ENCODE measurements at regions of chr3 and their contacts with region 1.

Region 1: DNA sequence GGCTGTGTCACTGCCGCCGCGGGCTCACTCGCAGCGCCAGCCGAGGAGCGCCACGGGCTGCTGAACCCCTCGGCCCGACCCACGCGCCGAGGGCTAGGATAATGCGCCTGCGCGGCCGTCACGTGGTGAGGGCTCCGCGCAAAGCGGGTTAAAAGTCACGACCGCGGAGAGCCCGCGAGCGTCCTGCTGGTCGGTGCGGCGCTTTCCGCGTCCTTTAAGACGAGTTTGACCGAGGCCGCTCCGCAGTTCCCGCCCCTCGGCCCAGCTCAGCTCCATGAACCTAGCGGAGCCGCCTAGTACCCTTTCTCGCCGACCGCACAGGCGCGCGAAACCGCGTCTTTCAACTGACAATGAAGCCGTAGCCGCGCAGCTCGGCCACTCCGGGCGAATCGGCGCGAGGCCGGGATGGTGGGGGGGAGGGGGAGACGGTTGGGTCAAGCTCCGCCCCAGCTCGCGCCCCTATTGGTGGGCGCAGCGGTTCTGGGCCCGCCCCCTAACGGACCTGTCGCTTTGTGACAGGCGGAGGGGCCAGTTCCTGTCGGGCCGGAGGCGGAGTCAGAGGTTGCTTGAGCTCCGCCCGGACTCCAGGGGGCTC is 636 bp upstream of the STT3B start:
- DNase-seq: peak; percentile 86
- ATAC-seq: peak; percentile 91
- H3K4me3 ChIP-seq: peak overlapping the region; percentile 92
- H3K27ac ChIP-seq: peak overlapping the region; percentile 92
- H3K4me1 ChIP-seq: peaks cover 6% of the 10 kb centered on the region; the same call in 1 of the 2 replicates
- H3K27me3 ChIP-seq: no peaks in the 10 kb centered on the region
- CTCF ChIP-seq: no peak
- EP300 ChIP-seq: peak; percentile 13 to 30; a peak in 1 of 4 replicates
- POLR2A ChIP-seq: peak; percentile 95
- RAD21 ChIP-seq: no peak

Region 2: GRCh38 chr3:30768703-30769685 is 763.1 kb before region 1 on chr3:
- CTCF ChIA-PET with region 1: interaction called, 4 read pairs
- POLR2A ChIA-PET with region 1: no interaction called
- RAD21 ChIA-PET with region 1: interaction called, 3 read pairs
- SMC1A ChIA-PET with region 1: interaction called, 4 read pairs
- in situ Hi-C with region 1: no loop called
- intact Hi-C with region 1: loop called (anchors 5 kb)
- DNase-seq: no peak
- ATAC-seq: peak; percentile 75
- H3K4me3 ChIP-seq: no peak overlapping the region
- H3K27ac ChIP-seq: no peak overlapping the region
- H3K4me1 ChIP-seq: no peaks in the 10 kb centered on the region
- H3K27me3 ChIP-seq: no peaks in the 10 kb centered on the region; a peak in 2 of 4 replicates
- CTCF ChIP-seq: peak; percentile 77
- EP300 ChIP-seq: no peak
- POLR2A ChIP-seq: no peak
- RAD21 ChIP-seq: peak; percentile 82

Region 3: GRCh38 chr3:31232055-31233025 is 299.7 kb before region 1 on chr3:
- CTCF ChIA-PET with region 1: no interaction called
- POLR2A ChIA-PET with region 1: interaction called, 12 read pairs
- RAD21 ChIA-PET with region 1: interaction called, 18 read pairs
- SMC1A ChIA-PET with region 1: interaction called, 18 read pairs
- in situ Hi-C with region 1: no loop called
- intact Hi-C with region 1: no loop called
- DNase-seq: no peak
- ATAC-seq: peak; percentile 23
- H3K4me3 ChIP-seq: no peak overlapping the region
- H3K27ac ChIP-seq: peak overlapping the region; percentile 57
- H3K4me1 ChIP-seq: peaks cover 37% of the 10 kb centered on the region
- H3K27me3 ChIP-seq: no peaks in the 10 kb centered on the region
- CTCF ChIP-seq: no peak
- EP300 ChIP-seq: no peak
- POLR2A ChIP-seq: no peak
- RAD21 ChIP-seq: no peak

Region 4: GRCh38 chr3:31364711-31365110 is 167.4 kb before region 1 on chr3:
- CTCF ChIA-PET with region 1: no interaction called
- POLR2A ChIA-PET with region 1: no interaction called
- RAD21 ChIA-PET with region 1: no interaction called
- SMC1A ChIA-PET with region 1: no interaction called
- in situ Hi-C with region 1: no loop called
- intact Hi-C with region 1: no loop called
- DNase-seq: no peak
- ATAC-seq: no peak
- H3K4me3 ChIP-seq: no peak overlapping the region
- H3K27ac ChIP-seq: no peak overlapping the region
- H3K4me1 ChIP-seq: no peaks in the 10 kb centered on the region
- H3K27me3 ChIP-seq: no peaks in the 10 kb centered on the region
- CTCF ChIP-seq: no peak; a peak in 1 of 6 replicates
- EP300 ChIP-seq: no peak
- POLR2A ChIP-seq: no peak
- RAD21 ChIP-seq: peak; percentile 47

Region 5: DNA sequence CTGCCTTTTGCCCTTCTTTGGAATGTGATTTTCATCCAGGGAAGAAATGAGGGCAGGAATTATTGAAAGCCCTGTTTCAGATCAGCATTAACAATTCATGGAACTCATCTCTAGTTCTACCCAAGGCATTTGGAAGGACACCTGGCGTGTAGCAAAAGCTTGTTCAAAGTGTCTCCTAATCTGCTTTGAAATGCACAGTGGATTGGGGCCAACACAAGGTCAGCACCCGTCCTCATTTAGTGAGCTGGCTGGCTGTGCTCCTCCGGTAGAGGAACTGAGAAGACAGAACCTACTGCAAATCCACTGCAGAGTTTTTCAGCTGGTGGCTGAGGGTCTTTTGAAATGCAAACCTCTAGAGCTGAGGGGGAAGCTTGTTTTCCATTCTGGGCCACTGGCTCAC is 140.9 kb before region 1 on chr3:
- CTCF ChIA-PET with region 1: interaction called, 3 read pairs
- POLR2A ChIA-PET with region 1: interaction called, 3 read pairs
- RAD21 ChIA-PET with region 1: interaction called, 4 read pairs
- SMC1A ChIA-PET with region 1: interaction called, 10 read pairs
- in situ Hi-C with region 1: no loop called
- intact Hi-C with region 1: no loop called
- DNase-seq: no peak
- ATAC-seq: peak; percentile 81
- H3K4me3 ChIP-seq: no peak overlapping the region
- H3K27ac ChIP-seq: peak overlapping the region; percentile 35; the same call in 1 of the 2 replicates
- H3K4me1 ChIP-seq: peaks cover 34% of the 10 kb centered on the region
- H3K27me3 ChIP-seq: no peaks in the 10 kb centered on the region
- CTCF ChIP-seq: no peak
- EP300 ChIP-seq: no peak
- POLR2A ChIP-seq: no peak
- RAD21 ChIP-seq: 0 out of 2 replicates have a peak, but pooled peaks have one; percentile 4

Region 6: DNA sequence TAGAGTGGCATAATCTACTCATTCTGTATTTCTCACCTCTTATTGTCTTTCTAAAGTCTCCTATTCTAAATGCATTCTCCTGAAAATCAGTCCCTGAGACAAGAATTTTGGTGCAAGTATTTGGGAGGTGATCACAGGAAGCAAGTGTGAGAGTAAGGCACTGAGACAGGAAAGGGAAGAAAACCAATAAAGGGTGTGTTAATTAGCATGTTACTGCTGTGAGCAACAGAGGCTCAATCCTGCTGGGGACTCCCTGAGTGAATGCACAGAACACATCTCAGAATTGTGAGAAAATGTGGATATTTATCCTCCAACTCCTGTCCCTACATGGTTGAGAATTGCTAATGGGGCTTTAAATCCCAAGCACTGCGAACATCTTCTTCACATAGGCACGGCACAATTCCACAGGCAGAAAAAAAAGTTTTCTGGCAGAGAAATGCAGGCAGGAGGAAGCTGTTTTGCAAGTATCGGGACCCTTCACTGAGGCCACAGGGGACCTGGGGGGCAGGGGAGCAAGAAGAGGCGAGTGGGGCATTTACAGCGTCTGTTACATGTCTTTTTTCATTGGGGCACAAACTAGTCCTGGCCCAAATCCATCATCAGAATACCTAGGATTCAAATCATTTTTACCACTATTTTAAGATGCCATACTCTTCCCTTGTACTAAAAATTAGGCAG is 26.6 kb before region 1 on chr3:
- CTCF ChIA-PET with region 1: interaction called, 5 read pairs
- POLR2A ChIA-PET with region 1: interaction called, 18 read pairs
- RAD21 ChIA-PET with region 1: interaction called, 15 read pairs
- SMC1A ChIA-PET with region 1: interaction called, 31 read pairs
- in situ Hi-C with region 1: no loop called
- intact Hi-C with region 1: no loop called
- DNase-seq: no peak
- ATAC-seq: no peak
- H3K4me3 ChIP-seq: no peak overlapping the region
- H3K27ac ChIP-seq: no peak overlapping the region
- H3K4me1 ChIP-seq: no peaks in the 10 kb centered on the region
- H3K27me3 ChIP-seq: no peaks in the 10 kb centered on the region; a peak in 1 of 4 replicates
- CTCF ChIP-seq: no peak
- EP300 ChIP-seq: no peak
- POLR2A ChIP-seq: no peak
- RAD21 ChIP-seq: no peak

Region 7: DNA sequence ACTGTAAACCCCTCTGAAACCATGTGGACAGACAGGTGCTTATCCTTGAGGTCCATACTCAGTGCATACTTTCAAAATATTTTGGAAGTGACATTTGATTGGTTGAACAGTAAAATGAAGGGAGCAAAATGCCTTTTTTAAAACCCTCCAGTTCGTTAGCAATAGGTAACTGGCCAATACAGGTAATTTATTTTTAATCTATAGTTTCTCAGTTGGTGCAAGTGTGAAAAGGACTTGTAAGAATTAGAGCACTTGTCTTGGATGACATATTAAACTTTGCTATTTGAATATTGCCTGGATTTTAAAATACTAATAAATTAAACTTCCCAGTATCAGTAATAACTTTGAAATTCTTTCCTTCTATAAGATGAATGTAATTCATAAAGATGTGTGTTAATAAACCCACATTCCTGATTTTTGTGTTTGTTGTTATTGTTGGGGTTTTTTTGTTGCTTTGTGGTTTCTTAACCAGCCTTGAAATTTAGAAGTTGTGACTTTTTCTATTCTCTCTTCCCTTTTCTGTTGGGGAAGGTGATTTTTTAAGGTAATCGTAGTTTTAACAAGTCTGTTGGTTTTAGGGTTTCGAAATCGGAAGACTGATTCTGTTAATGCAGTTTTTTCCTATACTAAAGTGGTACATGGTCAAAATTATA is 90.7 kb after region 1 on chr3:
- CTCF ChIA-PET with region 1: no interaction called
- POLR2A ChIA-PET with region 1: interaction called, 3 read pairs
- RAD21 ChIA-PET with region 1: interaction called, 6 read pairs
- SMC1A ChIA-PET with region 1: interaction called, 10 read pairs
- in situ Hi-C with region 1: no loop called
- intact Hi-C with region 1: no loop called
- DNase-seq: peak; percentile 41
- ATAC-seq: peak; percentile 80
- H3K4me3 ChIP-seq: no peak overlapping the region
- H3K27ac ChIP-seq: peak overlapping the region; percentile 0; the same call in 1 of the 2 replicates
- H3K4me1 ChIP-seq: peaks cover 25% of the 10 kb centered on the region
- H3K27me3 ChIP-seq: no peaks in the 10 kb centered on the region
- CTCF ChIP-seq: no peak
- EP300 ChIP-seq: peak; percentile 84 to 85
- POLR2A ChIP-seq: no peak
- RAD21 ChIP-seq: no peak

Region 8: DNA sequence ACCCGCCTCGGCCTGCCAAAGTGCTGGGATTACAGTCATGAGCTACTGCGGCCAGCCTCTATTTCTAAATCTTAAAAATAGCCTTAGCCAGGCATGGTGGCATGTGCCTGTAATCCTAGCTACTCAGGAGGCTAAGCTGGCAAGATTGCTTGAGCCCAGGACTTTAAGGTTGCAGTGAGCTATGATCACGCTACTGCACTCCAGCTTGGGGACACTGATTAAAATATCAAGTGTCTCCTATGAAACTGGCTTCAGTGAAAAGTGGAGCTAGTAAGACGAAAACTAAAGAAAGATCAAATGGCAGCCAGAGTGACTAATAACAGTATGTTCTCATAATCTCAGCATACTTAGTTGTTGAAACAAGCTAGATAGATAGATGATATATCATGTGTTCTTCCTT is 113.2 kb after region 1 on chr3:
- CTCF ChIA-PET with region 1: no interaction called
- POLR2A ChIA-PET with region 1: no interaction called
- RAD21 ChIA-PET with region 1: no interaction called
- SMC1A ChIA-PET with region 1: no interaction called
- in situ Hi-C with region 1: no loop called
- intact Hi-C with region 1: no loop called
- DNase-seq: no peak
- ATAC-seq: no peak
- H3K4me3 ChIP-seq: no peak overlapping the region
- H3K27ac ChIP-seq: no peak overlapping the region
- H3K4me1 ChIP-seq: no peaks in the 10 kb centered on the region
- H3K27me3 ChIP-seq: no peaks in the 10 kb centered on the region
- CTCF ChIP-seq: no peak
- EP300 ChIP-seq: no peak
- POLR2A ChIP-seq: no peak
- RAD21 ChIP-seq: no peak

Region 9: DNA sequence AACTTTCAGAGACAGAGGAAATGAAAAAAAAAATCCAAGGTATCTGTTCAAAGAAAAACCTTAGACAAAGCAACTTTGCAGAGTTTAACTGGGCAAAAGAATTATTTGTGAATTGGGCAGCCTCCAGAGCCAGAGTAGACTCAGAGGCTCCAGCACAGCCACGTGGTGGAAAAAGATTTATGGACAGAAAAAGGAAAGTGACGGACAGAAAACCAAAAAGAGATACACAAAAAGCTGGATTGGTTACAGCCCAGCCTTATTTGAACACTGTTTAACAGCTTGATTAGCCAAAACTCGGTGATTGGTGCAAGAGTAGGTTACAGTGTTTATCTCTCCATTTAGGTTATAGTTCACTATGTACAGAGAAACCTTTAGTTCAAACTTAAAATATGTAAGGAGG is 550.6 kb after region 1 on chr3:
- CTCF ChIA-PET with region 1: no interaction called
- POLR2A ChIA-PET with region 1: no interaction called
- RAD21 ChIA-PET with region 1: no interaction called
- SMC1A ChIA-PET with region 1: no interaction called
- in situ Hi-C with region 1: no loop called
- intact Hi-C with region 1: no loop called
- DNase-seq: no peak
- ATAC-seq: no peak
- H3K4me3 ChIP-seq: no peak overlapping the region
- H3K27ac ChIP-seq: no peak overlapping the region
- H3K4me1 ChIP-seq: no peaks in the 10 kb centered on the region
- H3K27me3 ChIP-seq: no peaks in the 10 kb centered on the region; a peak in 1 of 4 replicates
- CTCF ChIP-seq: no peak
- EP300 ChIP-seq: no peak
- POLR2A ChIP-seq: no peak
- RAD21 ChIP-seq: no peak

Measured in GM12878 (cell line).